CD8-positive, alpha-beta T cell (primary cell): ENCODE measurements at regions of chr1 and their contacts with region 1.

Region 1: GRCh38 chr1:33256701-33257399 is 558 bp downstream of the ZNF362 start:
- DNase-seq: peak; percentile 13 to 73 (median 55)
- ATAC-seq: peak; percentile 65
- H3K4me3 ChIP-seq: peak overlapping the region; percentile 62 to 75
- H3K4me3 Mint-ChIP-seq: peak overlapping the region; percentile 99
- H3K27ac ChIP-seq: peak overlapping the region; percentile 48 to 51
- H3K27ac Mint-ChIP-seq: peak overlapping the region; percentile 97
- H3K4me1 ChIP-seq: peaks cover 42% of the 10 kb centered on the region
- H3K4me1 Mint-ChIP-seq: peaks cover 47% of the 10 kb centered on the region
- H3K27me3 ChIP-seq: no peaks in the 10 kb centered on the region
- H3K27me3 Mint-ChIP-seq: no peaks in the 10 kb centered on the region
- CTCF ChIP-seq: no peak

Region 2: GRCh38 chr1:33242652-33243051 is 14.2 kb before region 1 on chr1:
- CTCF ChIA-PET with region 1: no interaction called
- POLR2A ChIA-PET with region 1: no interaction called
- intact Hi-C with region 1: loop called in 1 of 2 experiments (anchors 1 kb)
- DNase-seq: no peak
- ATAC-seq: no peak
- H3K4me3 ChIP-seq: no peak overlapping the region
- H3K4me3 Mint-ChIP-seq: no peak overlapping the region
- H3K27ac ChIP-seq: no peak overlapping the region
- H3K27ac Mint-ChIP-seq: no peak overlapping the region
- H3K4me1 ChIP-seq: no peaks in the 10 kb centered on the region
- H3K4me1 Mint-ChIP-seq: peaks cover 1% of the 10 kb centered on the region
- H3K27me3 ChIP-seq: no peaks in the 10 kb centered on the region
- H3K27me3 Mint-ChIP-seq: peaks cover 4% of the 10 kb centered on the region
- CTCF ChIP-seq: no peak